HEK293T (cell line): ENCODE measurements at regions of chr6 and their contacts with region 1.

Region 1: GRCh38 chr6:16964553-16965501 is 137.0 kb upstream of the STMND1 start:
- DNase-seq: peak; percentile 85

Region 2: GRCh38 chr6:16947375-16948015 is 17.3 kb before region 1 on chr6:
- CTCF ChIA-PET with region 1: interaction called, 12 read pairs
- POLR2A ChIA-PET with region 1: no interaction called
- DNase-seq: peak; percentile 51